Mucosa of descending colon (tissue), 3 donors: ENCODE measurements at regions of chr16 and their contacts with region 1.

Region 1: DNA sequence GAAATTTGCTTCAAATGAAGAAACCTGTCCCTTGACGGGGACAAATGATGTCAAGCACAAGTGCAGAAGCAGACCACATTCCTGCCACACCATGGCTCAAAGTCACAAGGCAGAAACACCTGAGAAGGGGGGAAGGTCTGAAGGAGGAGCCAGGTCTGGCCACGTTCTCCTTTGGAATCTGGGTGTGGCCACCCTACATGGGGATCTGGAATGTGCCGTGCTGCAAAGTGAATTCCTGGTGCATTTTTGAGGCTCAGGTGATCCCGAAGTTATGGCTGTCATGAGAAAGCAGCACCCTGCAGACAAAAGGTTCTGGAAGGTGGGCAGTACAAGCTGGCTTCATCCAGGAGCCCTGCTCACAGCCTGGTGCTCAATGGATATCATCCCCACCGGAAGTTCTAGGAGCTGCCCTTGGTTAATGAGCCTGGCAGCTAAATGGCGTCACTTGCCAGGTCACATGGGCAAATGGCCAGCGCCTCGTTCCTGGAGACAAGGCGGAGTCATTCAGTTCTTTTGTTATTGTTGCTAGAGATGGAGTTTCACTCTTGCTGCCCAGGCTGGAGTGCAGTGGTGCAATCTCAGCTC is 20.1 kb upstream of the ADCY9 start:
- DNase-seq: peak; percentile 75 to 84 (median 75)
- ATAC-seq: peak; percentile 94
- H3K4me3 ChIP-seq: no peak overlapping the region
- H3K4me1 ChIP-seq: no peaks in the 10 kb centered on the region
- CTCF ChIP-seq: no peak

Region 2: DNA sequence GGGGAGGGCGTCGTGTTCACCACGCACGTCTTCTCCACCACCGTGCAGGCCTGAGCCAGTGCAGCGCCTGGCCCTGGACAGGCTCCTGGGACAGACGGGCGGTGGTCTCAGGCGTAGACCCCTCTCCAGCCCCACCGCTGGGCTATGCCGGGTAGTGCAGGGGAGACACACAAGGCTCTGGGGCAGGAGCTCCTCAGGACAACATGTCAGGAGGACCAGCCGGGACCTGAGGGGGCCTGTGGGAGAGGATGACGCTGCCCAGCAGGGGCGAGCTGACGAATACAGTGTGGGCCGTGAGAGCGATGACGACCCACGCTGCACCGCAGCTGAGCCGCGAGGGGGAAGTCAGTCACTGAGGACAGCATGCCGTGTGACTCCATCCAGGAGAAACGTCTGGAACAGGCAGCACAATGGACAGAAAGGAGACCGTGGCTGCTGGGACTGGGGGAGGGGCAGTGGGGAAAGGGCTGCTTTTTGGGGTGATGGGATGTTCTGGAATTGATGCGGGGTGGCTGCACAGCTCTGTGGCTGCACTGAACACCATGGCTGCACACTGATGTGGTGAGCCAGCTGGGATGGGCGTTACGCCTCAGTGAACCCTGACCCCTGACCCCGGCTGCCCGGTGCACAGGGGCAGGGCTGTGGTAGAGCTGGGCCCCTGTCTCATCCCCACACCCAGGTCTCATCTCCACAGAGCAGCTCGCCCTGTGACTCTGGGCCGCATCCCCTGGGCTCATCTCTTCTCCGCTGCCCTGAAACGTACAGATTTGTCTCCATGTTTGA is 461.6 kb before region 1 on chr16:
- intact Hi-C with region 1: loop called in 1 of 2 experiments (anchors 10 kb)
- DNase-seq: peak in 1 of 3 donors; percentile 43
- ATAC-seq: no peak
- H3K4me3 ChIP-seq: no peak overlapping the region
- H3K4me1 ChIP-seq: no peaks in the 10 kb centered on the region
- CTCF ChIP-seq: no peak

Region 3: DNA sequence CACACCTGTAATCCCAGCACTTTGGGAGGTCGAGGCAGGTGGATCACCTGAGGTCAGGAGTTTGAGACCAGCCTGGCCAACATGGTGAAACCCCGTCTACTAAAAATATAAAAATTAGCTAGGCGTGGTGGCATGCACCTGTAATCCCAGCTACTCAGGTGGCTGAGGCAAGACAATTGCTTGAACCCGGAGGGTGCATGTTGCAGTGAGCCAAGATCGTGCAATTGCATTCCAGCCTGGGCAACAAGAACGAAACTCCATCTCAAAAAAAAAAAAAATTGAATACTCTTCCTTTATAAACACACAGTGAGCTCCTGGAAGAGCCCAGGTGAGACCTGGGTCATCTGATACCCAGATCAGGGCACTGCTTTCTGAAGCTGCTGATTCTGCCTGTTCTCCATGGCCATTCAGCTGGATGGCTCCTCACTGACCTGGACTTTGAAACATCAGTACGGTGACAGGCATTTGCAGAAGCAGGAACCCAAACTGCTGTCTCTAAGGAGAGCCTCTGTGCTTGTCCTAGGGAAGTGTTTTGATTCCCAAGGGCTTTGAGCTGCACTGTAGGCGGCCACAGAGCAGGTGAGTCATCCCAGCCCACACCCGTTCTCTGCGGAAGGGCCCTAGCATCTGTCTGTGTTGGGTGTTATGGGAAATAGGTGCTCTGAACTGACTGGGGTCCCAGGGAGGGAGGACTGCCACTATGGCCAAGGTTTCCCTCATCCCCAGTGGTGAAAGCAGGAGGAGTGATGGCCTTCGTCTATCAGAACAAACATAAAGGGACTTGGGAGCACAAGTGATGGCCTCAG is 40.5 kb after region 1 on chr16:
- intact Hi-C with region 1: no loop called
- DNase-seq: no peak
- ATAC-seq: peak; percentile 95
- H3K4me3 ChIP-seq: no peak overlapping the region
- H3K4me1 ChIP-seq: no peaks in the 10 kb centered on the region
- CTCF ChIP-seq: no peak